GM12878 (cell line): ENCODE measurements at regions of chr17 and their contacts with region 1.

Region 1: DNA sequence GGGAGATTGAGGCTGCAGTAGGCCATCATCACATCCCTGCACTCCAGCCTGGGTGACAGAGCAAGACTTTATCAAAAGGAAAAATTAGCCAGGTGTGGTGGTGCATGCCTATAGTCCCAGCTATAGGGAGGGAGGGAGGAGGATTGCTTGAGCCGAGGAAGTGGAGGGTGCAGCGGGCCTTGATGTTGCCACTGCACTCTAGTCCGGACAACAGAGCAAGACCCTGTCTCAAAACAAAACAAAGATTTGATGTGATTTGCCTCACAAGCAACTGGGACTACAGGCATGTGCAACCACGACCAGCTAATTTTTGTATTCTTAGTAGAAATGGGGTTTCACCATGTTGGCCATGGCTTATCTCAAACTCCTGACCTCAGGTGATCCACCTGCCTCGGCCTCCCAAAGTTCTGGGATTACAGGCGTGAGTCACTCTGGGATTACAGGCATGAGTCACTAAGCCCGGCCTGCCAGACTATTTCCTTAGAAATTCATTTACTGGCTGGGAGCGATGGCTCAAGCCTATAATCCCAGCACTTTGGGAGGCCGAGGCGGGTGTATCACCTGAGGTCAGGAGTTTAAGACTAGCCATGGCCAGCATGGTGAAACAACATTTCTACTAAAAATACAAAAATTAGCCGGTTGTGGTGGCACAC is 11.5 kb downstream of the UBE2G1 start:
- DNase-seq: no peak
- ATAC-seq: no peak
- H3K4me3 ChIP-seq: peak overlapping the region; percentile 10; the same call in 1 of the 2 replicates
- H3K27ac ChIP-seq: peak overlapping the region; percentile 46
- H3K4me1 ChIP-seq: peaks cover 54% of the 10 kb centered on the region
- H3K27me3 ChIP-seq: no peaks in the 10 kb centered on the region
- CTCF ChIP-seq: no peak
- EP300 ChIP-seq: no peak
- POLR2A ChIP-seq: no peak
- RAD21 ChIP-seq: no peak

Region 2: DNA sequence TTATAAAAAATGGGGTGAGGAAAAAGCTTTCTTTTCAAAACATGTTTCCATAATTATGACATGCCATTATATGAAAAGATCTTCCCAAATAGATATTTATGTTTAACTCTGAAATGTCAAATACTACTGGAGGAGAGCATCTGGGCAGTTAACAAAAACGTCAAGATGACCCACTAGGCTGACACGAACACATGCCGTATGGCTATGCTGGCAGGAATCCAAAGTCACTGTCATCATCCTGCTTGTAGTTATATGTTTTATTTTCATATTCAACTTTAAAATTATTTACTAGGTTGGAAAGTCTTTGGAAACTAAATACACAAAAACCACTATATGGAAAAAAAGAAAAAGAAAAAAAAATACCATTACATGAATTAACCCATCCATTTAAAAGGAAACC is 118.5 kb before region 1 on chr17:
- CTCF ChIA-PET with region 1: no interaction called
- POLR2A ChIA-PET with region 1: no interaction called
- RAD21 ChIA-PET with region 1: no interaction called
- SMC1A ChIA-PET with region 1: no interaction called
- in situ Hi-C with region 1: no loop called
- intact Hi-C with region 1: no loop called
- DNase-seq: no peak
- ATAC-seq: no peak
- H3K4me3 ChIP-seq: no peak overlapping the region
- H3K27ac ChIP-seq: no peak overlapping the region
- H3K4me1 ChIP-seq: no peaks in the 10 kb centered on the region
- H3K27me3 ChIP-seq: no peaks in the 10 kb centered on the region
- CTCF ChIP-seq: no peak
- EP300 ChIP-seq: no peak
- POLR2A ChIP-seq: no peak
- RAD21 ChIP-seq: no peak

Region 3: DNA sequence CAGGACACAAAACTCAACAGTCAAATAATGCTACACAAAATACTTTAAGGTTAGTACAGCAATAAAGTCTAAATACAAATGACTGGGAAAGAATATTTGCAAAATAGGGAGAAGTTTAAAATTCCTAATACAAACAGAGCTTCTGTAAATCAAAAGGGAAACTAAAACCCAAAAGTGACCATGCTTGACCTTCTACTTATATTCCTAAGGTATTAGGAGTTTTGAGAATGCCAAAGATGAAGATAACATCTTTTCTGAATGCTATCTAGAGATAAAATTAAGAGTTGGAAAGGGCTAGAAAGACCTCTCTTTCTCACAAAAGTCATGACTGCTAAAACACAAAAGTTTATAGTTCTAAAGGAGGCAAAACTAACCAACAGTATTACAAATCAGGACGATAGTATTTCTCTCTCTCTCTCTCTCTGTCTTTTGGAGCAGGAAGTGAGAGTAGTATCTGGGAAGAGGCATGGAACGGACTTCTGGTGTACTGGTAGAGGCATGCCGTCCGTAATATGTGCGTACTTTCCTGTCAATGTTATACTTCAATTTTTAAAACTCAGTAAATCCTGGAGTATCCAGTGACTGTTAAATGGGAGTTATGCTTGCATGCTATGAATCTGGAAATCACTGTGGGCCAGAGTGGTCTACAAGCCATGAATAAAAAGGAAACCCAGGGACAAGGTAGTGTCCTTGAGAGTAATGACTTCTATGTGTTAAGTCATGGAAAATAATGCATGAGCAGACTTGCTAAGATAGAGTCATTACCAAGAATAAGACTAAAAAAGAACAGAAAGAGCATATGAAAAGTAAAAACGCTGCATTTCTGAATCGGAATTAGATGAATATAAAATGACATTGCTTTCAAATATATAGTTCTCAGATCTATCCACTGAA is 41.5 kb before region 1 on chr17:
- CTCF ChIA-PET with region 1: no interaction called
- POLR2A ChIA-PET with region 1: no interaction called
- RAD21 ChIA-PET with region 1: no interaction called
- SMC1A ChIA-PET with region 1: interaction called, 3 read pairs
- in situ Hi-C with region 1: no loop called
- intact Hi-C with region 1: loop called (anchors 2 kb)
- DNase-seq: no peak
- ATAC-seq: peak; percentile 55
- H3K4me3 ChIP-seq: peak overlapping the region; percentile 33
- H3K27ac ChIP-seq: peak overlapping the region; percentile 63
- H3K4me1 ChIP-seq: peaks cover 18% of the 10 kb centered on the region
- H3K27me3 ChIP-seq: no peaks in the 10 kb centered on the region
- CTCF ChIP-seq: no peak
- EP300 ChIP-seq: no peak
- POLR2A ChIP-seq: no peak
- RAD21 ChIP-seq: no peak

Region 4: DNA sequence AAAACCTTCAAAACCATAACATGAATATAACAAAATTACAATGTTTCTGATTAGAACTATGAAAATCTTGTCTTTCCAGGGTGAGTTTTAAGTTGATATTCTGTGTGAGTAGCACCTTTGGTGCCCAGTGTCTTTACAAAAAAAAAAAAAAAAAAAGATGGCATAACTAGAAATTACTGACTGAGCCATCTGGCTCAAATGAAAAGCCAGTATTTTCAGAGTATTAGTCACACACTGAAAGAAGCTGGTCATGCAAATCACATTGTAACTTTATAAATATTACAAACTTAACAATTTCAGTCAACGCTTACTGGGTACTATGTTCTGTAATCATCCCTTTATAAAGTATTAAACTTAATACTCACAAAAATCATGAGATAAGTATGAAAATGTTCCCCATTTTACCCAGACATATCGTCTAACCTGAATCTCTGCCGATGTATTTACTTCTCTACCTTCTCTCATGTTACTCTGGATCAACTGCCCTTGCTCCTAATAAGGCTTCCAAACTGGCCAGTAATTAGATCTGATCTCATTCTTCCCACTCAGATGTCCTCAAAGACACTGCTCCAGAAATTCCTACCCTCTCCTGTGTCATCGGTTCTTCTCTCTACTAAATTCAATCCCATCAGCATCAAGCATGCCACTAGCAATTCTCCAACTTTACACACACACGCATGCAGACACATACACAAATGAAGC is 13.9 kb before region 1 on chr17:
- CTCF ChIA-PET with region 1: interaction called, 5 read pairs
- POLR2A ChIA-PET with region 1: interaction called, 5 read pairs
- RAD21 ChIA-PET with region 1: interaction called, 4 read pairs
- SMC1A ChIA-PET with region 1: interaction called, 16 read pairs
- in situ Hi-C with region 1: no loop called
- intact Hi-C with region 1: no loop called
- DNase-seq: no peak
- ATAC-seq: peak; percentile 77
- H3K4me3 ChIP-seq: peak overlapping the region; percentile 11; the same call in 1 of the 2 replicates
- H3K27ac ChIP-seq: peak overlapping the region; percentile 23
- H3K4me1 ChIP-seq: peaks cover 32% of the 10 kb centered on the region
- H3K27me3 ChIP-seq: no peaks in the 10 kb centered on the region
- CTCF ChIP-seq: no peak
- EP300 ChIP-seq: no peak
- POLR2A ChIP-seq: no peak
- RAD21 ChIP-seq: no peak

Region 5: GRCh38 chr17:4375039-4375748 is 20.2 kb after region 1 on chr17:
- CTCF ChIA-PET with region 1: no interaction called
- POLR2A ChIA-PET with region 1: interaction called, 4 read pairs
- RAD21 ChIA-PET with region 1: interaction called, 8 read pairs
- SMC1A ChIA-PET with region 1: interaction called, 4 read pairs
- in situ Hi-C with region 1: no loop called
- intact Hi-C with region 1: loop called (anchors 2 kb)
- DNase-seq: peak; percentile 98
- ATAC-seq: peak; percentile 82
- H3K4me3 ChIP-seq: peak overlapping the region; percentile 8; the same call in 1 of the 2 replicates
- H3K27ac ChIP-seq: peak overlapping the region; percentile 85
- H3K4me1 ChIP-seq: peaks cover 45% of the 10 kb centered on the region
- H3K27me3 ChIP-seq: no peaks in the 10 kb centered on the region
- CTCF ChIP-seq: no peak
- EP300 ChIP-seq: peak; percentile 93 to 96
- POLR2A ChIP-seq: peak; percentile 42; the same call in 1 of the 2 replicates
- RAD21 ChIP-seq: no peak

Region 6: DNA sequence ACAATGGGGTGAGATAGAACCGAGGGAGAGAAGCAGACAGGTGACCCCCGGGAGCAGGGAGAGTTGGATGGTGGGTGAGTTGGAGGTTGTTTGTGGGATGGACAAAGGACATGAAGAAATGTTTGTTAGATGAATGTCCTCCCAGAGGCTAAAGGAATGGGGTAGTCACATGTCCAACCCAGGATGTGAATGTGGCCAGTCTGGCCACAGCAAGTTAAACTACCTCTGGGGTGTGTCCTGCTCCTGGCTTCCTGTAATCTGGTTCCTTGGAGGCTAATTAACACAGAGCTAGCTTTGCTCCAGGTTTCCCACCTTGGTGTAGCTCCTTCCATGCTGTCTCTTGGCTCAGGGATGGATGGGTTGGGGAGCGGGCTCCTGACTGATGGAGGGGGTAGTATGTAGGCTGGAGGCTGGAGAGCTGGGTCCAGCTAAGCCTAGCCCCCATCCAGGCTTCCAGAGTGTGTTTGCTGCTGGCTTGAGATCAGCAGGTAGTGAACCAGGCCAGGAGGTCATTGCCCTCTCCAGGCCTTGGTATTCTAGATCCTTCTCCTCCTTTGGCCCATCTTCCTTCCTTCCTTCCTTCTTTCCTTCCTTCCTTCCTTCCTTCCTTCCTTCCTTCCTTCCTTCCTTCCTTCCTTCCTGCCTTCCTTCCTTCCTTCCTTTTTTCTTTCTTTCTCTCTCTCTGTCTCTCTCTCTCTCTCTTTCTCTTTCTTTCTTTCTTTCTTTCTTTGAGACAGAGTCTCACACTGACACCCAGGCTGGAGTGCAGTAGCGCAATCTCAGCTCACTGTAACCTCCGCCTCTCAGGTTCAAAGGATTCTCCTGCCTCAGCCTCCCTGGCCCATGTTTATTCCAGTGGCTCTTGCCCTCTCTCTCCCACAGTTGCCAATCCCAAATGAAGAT is 39.5 kb after region 1 on chr17:
- CTCF ChIA-PET with region 1: no interaction called
- POLR2A ChIA-PET with region 1: interaction called, 3 read pairs
- RAD21 ChIA-PET with region 1: interaction called, 6 read pairs
- SMC1A ChIA-PET with region 1: no interaction called
- in situ Hi-C with region 1: no loop called
- intact Hi-C with region 1: loop called (anchors 5 kb)
- DNase-seq: no peak
- ATAC-seq: no peak
- H3K4me3 ChIP-seq: peak overlapping the region; percentile 49
- H3K27ac ChIP-seq: peak overlapping the region; percentile 98
- H3K4me1 ChIP-seq: peaks cover 48% of the 10 kb centered on the region
- H3K27me3 ChIP-seq: no peaks in the 10 kb centered on the region
- CTCF ChIP-seq: no peak
- EP300 ChIP-seq: no peak
- POLR2A ChIP-seq: no peak
- RAD21 ChIP-seq: no peak

Region 7: GRCh38 chr17:4444782-4445473 is 89.9 kb after region 1 on chr17:
- CTCF ChIA-PET with region 1: no interaction called
- POLR2A ChIA-PET with region 1: no interaction called
- RAD21 ChIA-PET with region 1: no interaction called
- SMC1A ChIA-PET with region 1: no interaction called
- in situ Hi-C with region 1: no loop called
- intact Hi-C with region 1: no loop called
- DNase-seq: no peak
- ATAC-seq: no peak
- H3K4me3 ChIP-seq: no peak overlapping the region
- H3K27ac ChIP-seq: no peak overlapping the region
- H3K4me1 ChIP-seq: no peaks in the 10 kb centered on the region
- H3K27me3 ChIP-seq: no peaks in the 10 kb centered on the region; a peak in 1 of 4 replicates
- CTCF ChIP-seq: no peak
- EP300 ChIP-seq: no peak
- POLR2A ChIP-seq: no peak
- RAD21 ChIP-seq: no peak